Mammary epithelial cell (primary cell): ENCODE measurements at regions of chr1 and their contacts with region 1.

Region 1: GRCh38 chr1:242023805-242024204 is 24.9 kb upstream of the MAP1LC3C start:
- DNase-seq: no peak
- H3K4me3 ChIP-seq: no peak overlapping the region
- H3K27ac ChIP-seq: no peak overlapping the region
- H3K4me1 ChIP-seq: peaks cover 4% of the 10 kb centered on the region
- H3K27me3 ChIP-seq: no peaks in the 10 kb centered on the region
- CTCF ChIP-seq: no peak

Region 2: GRCh38 chr1:241847796-241848685 is 175.8 kb before region 1 on chr1 and contains the start of gene EXO1:
- CTCF ChIA-PET with region 1: no interaction called
- dilution Hi-C with region 1: no loop called
- in situ Hi-C with region 1: no loop called
- intact Hi-C with region 1: no loop called
- DNase-seq: peak; percentile 93
- H3K4me3 ChIP-seq: peak within 1 kb of the TSS; percentile 83 to 96 (median 92)
- H3K27ac ChIP-seq: peak within 1 kb of the TSS; percentile 83
- H3K4me1 ChIP-seq: peaks cover 14% of the 10 kb centered on the region
- H3K27me3 ChIP-seq: no peaks in the 10 kb centered on the region
- CTCF ChIP-seq: peak in 1 of 2 donors; percentile 43
- total RNA-seq, gene EXO1: 3.3 to 21.4 TPM

Region 3: DNA sequence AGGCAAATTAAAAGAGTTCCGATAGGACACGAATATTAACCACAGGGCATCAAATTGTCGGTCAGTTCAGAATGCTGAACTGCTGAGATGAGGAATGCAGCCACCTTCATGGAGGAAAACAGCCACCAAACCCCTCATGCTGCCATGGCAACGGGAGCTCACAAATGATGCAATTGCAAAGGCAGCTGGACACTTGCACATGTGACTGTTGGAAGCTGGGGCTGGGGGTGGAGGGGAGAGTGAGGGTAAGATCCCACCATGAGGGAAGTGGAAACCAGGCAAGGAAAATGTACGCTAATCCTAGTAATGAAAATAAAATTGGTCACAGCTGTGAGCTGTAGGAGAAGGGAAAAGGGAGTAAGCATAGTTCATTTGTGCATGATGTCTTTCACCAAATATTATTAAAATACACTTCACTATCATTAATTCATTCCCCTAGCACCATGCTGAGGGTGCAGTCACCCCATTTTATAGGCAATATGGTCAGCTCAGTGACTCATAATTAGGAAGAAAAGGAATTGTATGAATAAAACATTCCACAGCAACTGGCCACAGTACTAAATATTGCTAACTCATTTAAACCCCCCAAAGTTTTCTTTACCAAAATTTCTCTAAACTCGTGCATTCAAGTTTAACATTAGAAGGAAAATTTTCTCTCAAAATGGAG is 51.0 kb before region 1 on chr1:
- CTCF ChIA-PET with region 1: no interaction called
- dilution Hi-C with region 1: no loop called
- in situ Hi-C with region 1: no loop called
- intact Hi-C with region 1: no loop called
- DNase-seq: no peak
- H3K4me3 ChIP-seq: no peak overlapping the region
- H3K27ac ChIP-seq: no peak overlapping the region
- H3K4me1 ChIP-seq: no peaks in the 10 kb centered on the region
- H3K27me3 ChIP-seq: no peaks in the 10 kb centered on the region
- CTCF ChIP-seq: no peak

Region 4: GRCh38 chr1:241985787-241986186 is 38.0 kb before region 1 on chr1:
- CTCF ChIA-PET with region 1: no interaction called
- dilution Hi-C with region 1: no loop called
- in situ Hi-C with region 1: no loop called
- intact Hi-C with region 1: no loop called
- DNase-seq: peak; percentile 40
- H3K4me3 ChIP-seq: no peak overlapping the region
- H3K27ac ChIP-seq: no peak overlapping the region
- H3K4me1 ChIP-seq: no peaks in the 10 kb centered on the region
- H3K27me3 ChIP-seq: no peaks in the 10 kb centered on the region
- CTCF ChIP-seq: peak; percentile 60

Region 5: GRCh38 chr1:242128951-242129502 is 105.2 kb after region 1 on chr1:
- CTCF ChIA-PET with region 1: no interaction called
- dilution Hi-C with region 1: no loop called
- in situ Hi-C with region 1: no loop called
- intact Hi-C with region 1: loop called (anchors 5 kb)
- DNase-seq: peak; percentile 51
- H3K4me3 ChIP-seq: no peak overlapping the region
- H3K27ac ChIP-seq: no peak overlapping the region
- H3K4me1 ChIP-seq: no peaks in the 10 kb centered on the region
- H3K27me3 ChIP-seq: no peaks in the 10 kb centered on the region
- CTCF ChIP-seq: peak; percentile 32 to 44

Region 6: DNA sequence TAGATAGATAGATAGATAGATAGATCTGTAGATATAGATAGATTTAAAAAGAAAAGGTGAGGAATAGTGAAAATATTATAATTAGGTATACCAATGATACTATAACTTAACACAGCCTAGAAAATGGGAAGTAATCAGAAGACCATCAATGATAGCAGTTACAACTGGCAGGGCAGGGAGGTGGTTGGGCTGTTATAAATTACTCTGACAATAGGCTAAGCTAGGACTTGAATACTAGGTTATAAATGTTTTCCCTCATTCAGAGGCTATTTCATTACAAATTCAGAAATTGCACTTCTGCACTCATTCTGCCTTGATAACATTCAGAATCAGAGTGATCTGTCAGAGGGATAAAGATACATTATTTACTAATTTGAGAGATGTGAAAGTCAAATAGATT is 774.1 kb after region 1 on chr1:
- CTCF ChIA-PET with region 1: no interaction called
- dilution Hi-C with region 1: no loop called
- in situ Hi-C with region 1: no loop called
- intact Hi-C with region 1: loop called (anchors 10 kb)
- DNase-seq: no peak
- H3K4me3 ChIP-seq: no peak overlapping the region
- H3K27ac ChIP-seq: no peak overlapping the region
- H3K4me1 ChIP-seq: no peaks in the 10 kb centered on the region
- H3K27me3 ChIP-seq: peaks cover 15% of the 10 kb centered on the region
- CTCF ChIP-seq: no peak